Astrocyte of the cerebellum (primary cell): ENCODE measurements at regions of chr6 and their contacts with region 1.

Region 1: GRCh38 chr6:66838764-66839163 is 1131.7 kb upstream of the EYS start:
- DNase-seq: no peak
- H3K4me3 ChIP-seq: no peak overlapping the region
- CTCF ChIP-seq: no peak

Region 2: DNA sequence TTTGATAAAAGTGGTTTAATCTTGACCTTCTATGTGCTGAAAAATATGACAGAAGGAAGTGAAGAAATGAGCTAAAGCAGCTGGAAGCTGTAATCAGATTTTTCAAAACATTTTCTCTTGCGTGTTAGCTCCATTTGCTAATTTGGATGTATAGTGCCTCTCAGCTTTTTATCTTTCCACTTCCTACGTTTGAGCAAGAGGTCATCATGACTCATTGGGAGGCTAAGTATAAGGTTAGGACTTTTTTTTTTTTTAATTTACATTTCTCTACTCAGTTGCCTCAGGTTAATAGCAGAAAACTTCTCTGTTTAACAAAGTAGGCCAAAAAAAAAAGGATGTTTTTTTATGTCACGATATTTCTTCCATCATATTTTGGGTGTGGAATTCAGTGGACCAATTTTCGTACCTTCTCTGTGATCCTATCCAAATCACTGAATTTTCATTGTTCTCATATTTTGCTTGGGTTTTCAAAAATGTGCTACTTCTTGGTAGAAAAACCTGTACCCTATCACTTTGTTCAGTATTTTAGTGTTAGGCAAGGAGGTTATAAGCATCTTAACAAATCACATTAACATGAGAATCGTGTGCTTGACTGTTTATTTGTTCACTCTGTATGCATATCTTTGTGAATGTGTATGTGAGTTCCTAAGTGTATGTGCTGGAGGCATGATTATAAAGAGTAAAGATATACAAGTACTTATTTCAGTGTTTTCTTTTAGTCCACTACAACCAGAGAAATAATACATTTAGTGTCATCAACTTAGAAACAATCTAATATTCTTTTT is 103.5 kb before region 1 on chr6:
- in situ Hi-C with region 1: loop called (anchors 5 kb)
- DNase-seq: no peak
- H3K4me3 ChIP-seq: no peak overlapping the region
- CTCF ChIP-seq: no peak

Region 3: GRCh38 chr6:66788579-66788978 is 50.2 kb before region 1 on chr6:
- in situ Hi-C with region 1: no loop called
- DNase-seq: no peak
- H3K4me3 ChIP-seq: no peak overlapping the region
- CTCF ChIP-seq: no peak

Region 4: GRCh38 chr6:66930559-66931290 is 92.0 kb after region 1 on chr6:
- in situ Hi-C with region 1: no loop called
- DNase-seq: no peak
- H3K4me3 ChIP-seq: no peak overlapping the region
- CTCF ChIP-seq: no peak

Region 5: DNA sequence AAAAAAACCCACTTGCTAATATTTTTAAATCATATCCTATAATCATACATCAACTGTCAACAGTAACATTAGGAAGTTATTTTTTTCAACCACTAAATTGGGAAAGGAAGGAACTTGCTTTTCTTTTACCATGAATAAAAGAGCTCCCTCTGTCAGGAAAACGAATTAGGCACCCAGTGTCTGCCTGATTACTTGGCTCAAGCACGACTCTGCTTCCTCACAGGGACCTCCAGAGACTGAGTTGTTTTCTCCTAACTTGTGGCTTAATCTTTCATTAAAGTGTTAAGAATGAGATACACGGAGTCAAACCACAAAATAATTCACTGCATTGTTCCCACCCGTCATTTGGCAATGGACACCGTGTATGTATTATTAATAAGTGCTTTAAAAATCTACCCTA is 273.4 kb after region 1 on chr6:
- in situ Hi-C with region 1: no loop called
- DNase-seq: peak; percentile 29
- H3K4me3 ChIP-seq: no peak overlapping the region
- CTCF ChIP-seq: no peak